Heart right ventricle (tissue), 16 donors: ENCODE measurements at regions of chr3 and their contacts with region 1.

Region 1: DNA sequence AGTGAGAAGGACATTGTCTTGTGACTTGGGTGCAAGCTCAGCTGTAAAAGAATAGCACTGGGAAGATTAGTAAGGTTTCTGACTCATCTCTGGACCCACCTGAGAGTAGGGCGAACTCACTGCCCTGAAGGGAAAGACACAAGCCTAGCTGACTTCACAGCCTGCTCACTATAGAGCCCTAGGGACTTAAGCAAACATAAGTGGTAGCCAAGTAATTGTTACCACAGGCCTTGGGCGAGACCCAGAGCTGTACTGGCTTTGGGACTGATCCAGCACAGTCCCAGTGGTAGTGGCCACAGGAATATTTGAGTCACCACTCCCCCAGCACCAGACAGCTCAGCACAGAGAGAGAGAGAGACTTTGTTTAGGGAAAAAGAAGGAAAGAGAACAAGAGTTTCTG is 429.9 kb downstream of the TBL1XR1 start:
- DNase-seq: no peak
- ATAC-seq: peak in 1 of 8 donors; percentile 70
- H3K4me3 ChIP-seq: no peak overlapping the region
- H3K27ac ChIP-seq: no peak overlapping the region
- H3K4me1 ChIP-seq: no peaks in the 10 kb centered on the region
- H3K27me3 ChIP-seq: no peaks in the 10 kb centered on the region
- CTCF ChIP-seq: no peak

Region 2: DNA sequence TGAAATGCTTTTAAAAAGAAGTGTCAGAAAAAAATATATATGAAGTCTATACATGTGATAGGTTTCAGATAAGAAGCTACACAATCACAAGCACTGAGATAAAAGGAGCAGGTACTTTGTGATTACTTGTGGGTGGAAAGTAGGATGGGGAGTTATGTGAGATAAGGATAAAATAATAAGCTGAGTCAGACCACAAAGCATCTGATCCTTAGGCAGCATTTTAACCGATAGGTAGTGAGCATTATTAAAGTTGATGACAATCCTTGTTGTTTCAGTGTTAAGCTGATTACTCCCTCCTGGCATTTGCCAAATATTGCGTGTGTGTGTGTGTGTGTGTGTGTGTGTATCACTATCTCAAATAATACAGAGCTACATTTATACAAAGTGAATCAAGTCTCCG is 1425.2 kb before region 1 on chr3:
- intact Hi-C with region 1: loop called in 1 of 10 experiments (anchors 5 kb)
- DNase-seq: no peak
- ATAC-seq: no peak
- H3K4me3 ChIP-seq: no peak overlapping the region
- H3K27ac ChIP-seq: no peak overlapping the region
- H3K4me1 ChIP-seq: peaks cover 0 to 5% (median 0%) of the 10 kb centered on the region in 9 donors
- H3K27me3 ChIP-seq: no peaks in the 10 kb centered on the region
- CTCF ChIP-seq: no peak

Region 3: GRCh38 chr3:176807938-176808337 is 40.6 kb after region 1 on chr3:
- intact Hi-C with region 1: no loop called
- DNase-seq: no peak
- ATAC-seq: no peak
- H3K4me3 ChIP-seq: no peak overlapping the region
- H3K27ac ChIP-seq: no peak overlapping the region
- H3K4me1 ChIP-seq: peaks cover 0 to 5% (median 0%) of the 10 kb centered on the region in 9 donors
- H3K27me3 ChIP-seq: no peaks in the 10 kb centered on the region
- CTCF ChIP-seq: no peak